ENCODE measurements at regions of chr3 and their contacts with region 1.

Region 1: GRCh38 chr3:126982471-126983175 is at the start of gene PLXNA1:
- DNase-seq: peak; percentile 81 to 95 (median 83)
- ATAC-seq: peak; percentile 81
- H3K4me3 ChIP-seq: peak within 1 kb of the TSS; percentile 57 to 69
- H3K4me3 Mint-ChIP-seq: peak within 1 kb of the TSS; percentile 85
- H3K27ac ChIP-seq: peak within 1 kb of the TSS; percentile 71 to 90
- H3K27ac Mint-ChIP-seq: peak within 1 kb of the TSS; percentile 94
- H3K4me1 ChIP-seq: peaks cover 19% of the 10 kb centered on the region
- H3K4me1 Mint-ChIP-seq: peaks cover 12% of the 10 kb centered on the region
- H3K27me3 ChIP-seq: peaks cover 0 to 2% of the 10 kb centered on the region in 2 experiments
- H3K27me3 Mint-ChIP-seq: peaks cover 14% of the 10 kb centered on the region
- CTCF ChIP-seq: peak; percentile 92
- total RNA-seq, gene PLXNA1: 7.3 to 8.4 TPM

Region 2: GRCh38 chr3:125594581-125595011 is 1388.0 kb before region 1 on chr3:
- CTCF ChIA-PET with region 1: no interaction called
- POLR2A ChIA-PET with region 1: no interaction called
- intact Hi-C with region 1: loop called in 1 of 2 experiments (anchors 5 kb)
- DNase-seq: peak in 2 of 9 experiments; percentile 6 to 17
- ATAC-seq: no peak
- H3K4me3 ChIP-seq: peak overlapping the region; percentile 85 to 91
- H3K4me3 Mint-ChIP-seq: peak overlapping the region; percentile 92
- H3K27ac ChIP-seq: peak overlapping the region; percentile 68 to 87
- H3K27ac Mint-ChIP-seq: peak overlapping the region; percentile 77
- H3K4me1 ChIP-seq: peaks cover 16% of the 10 kb centered on the region
- H3K4me1 Mint-ChIP-seq: peaks cover 44% of the 10 kb centered on the region
- H3K27me3 ChIP-seq: no peaks in the 10 kb centered on the region
- H3K27me3 Mint-ChIP-seq: no peaks in the 10 kb centered on the region
- CTCF ChIP-seq: no peak

Region 3: GRCh38 chr3:126357295-126358037 is 625.2 kb before region 1 on chr3 and contains the start of gene KLF15:
- CTCF ChIA-PET with region 1: no interaction called
- POLR2A ChIA-PET with region 1: no interaction called
- intact Hi-C with region 1: loop called in 1 of 2 experiments (anchors 2 kb)
- DNase-seq: peak; percentile 46 to 85 (median 71)
- ATAC-seq: peak; percentile 94
- H3K4me3 ChIP-seq: peak within 1 kb of the TSS; percentile 50 to 79
- H3K4me3 Mint-ChIP-seq: peak within 1 kb of the TSS; percentile 90
- H3K27ac ChIP-seq: no peak within 1 kb of the TSS
- H3K27ac Mint-ChIP-seq: peak within 1 kb of the TSS; percentile 77
- H3K4me1 ChIP-seq: peaks cover 14% of the 10 kb centered on the region
- H3K4me1 Mint-ChIP-seq: peaks cover 15% of the 10 kb centered on the region
- H3K27me3 ChIP-seq: peaks cover 13 to 19% of the 10 kb centered on the region in 2 experiments
- H3K27me3 Mint-ChIP-seq: peaks cover 52% of the 10 kb centered on the region
- CTCF ChIP-seq: no peak
- total RNA-seq, gene KLF15: 0.16 TPM in 1 of 2 experiments, not detected in the other

Region 4: GRCh38 chr3:126654571-126655383 is 327.8 kb before region 1 on chr3 and contains the start of gene TXNRD3:
- CTCF ChIA-PET with region 1: no interaction called
- POLR2A ChIA-PET with region 1: no interaction called
- intact Hi-C with region 1: loop called in 1 of 2 experiments (anchors 1 kb)
- DNase-seq: peak; percentile 52 to 87 (median 78)
- ATAC-seq: peak; percentile 97
- H3K4me3 ChIP-seq: peak within 1 kb of the TSS; percentile 35 to 58
- H3K4me3 Mint-ChIP-seq: peak within 1 kb of the TSS; percentile 88
- H3K27ac ChIP-seq: peak within 1 kb of the TSS in 1 of 2 experiments; percentile 27
- H3K27ac Mint-ChIP-seq: peak within 1 kb of the TSS; percentile 55
- H3K4me1 ChIP-seq: peaks cover 3% of the 10 kb centered on the region
- H3K4me1 Mint-ChIP-seq: peaks cover 10% of the 10 kb centered on the region
- H3K27me3 ChIP-seq: no peaks in the 10 kb centered on the region
- H3K27me3 Mint-ChIP-seq: no peaks in the 10 kb centered on the region
- CTCF ChIP-seq: no peak
- total RNA-seq, gene TXNRD3: 1.6 to 1.7 TPM

Region 5: DNA sequence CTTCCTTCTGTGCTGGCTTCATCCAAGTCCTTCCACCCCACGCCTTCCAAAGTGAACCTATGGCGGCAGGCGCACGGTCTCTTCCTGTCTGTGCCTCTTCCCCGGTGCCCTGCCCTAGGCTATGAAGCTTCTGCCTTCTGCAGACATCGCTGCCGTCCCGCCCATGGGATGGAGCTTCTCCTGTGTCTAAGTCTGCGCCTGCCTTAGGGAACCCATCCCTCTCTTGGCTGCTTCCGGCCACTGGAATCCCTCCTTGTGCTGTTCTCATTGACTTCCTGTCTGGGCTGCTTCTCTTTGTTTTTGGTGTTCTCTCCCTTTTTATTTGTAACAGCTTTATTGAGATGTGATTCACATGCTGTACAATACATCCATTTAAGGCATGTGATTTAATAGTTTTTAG is 261.4 kb before region 1 on chr3:
- CTCF ChIA-PET with region 1: no interaction called
- POLR2A ChIA-PET with region 1: no interaction called
- intact Hi-C with region 1: no loop called
- DNase-seq: no peak
- ATAC-seq: no peak
- H3K4me3 ChIP-seq: no peak overlapping the region
- H3K4me3 Mint-ChIP-seq: no peak overlapping the region
- H3K27ac ChIP-seq: no peak overlapping the region
- H3K27ac Mint-ChIP-seq: no peak overlapping the region
- H3K4me1 ChIP-seq: no peaks in the 10 kb centered on the region
- H3K4me1 Mint-ChIP-seq: peaks cover 8% of the 10 kb centered on the region
- H3K27me3 ChIP-seq: no peaks in the 10 kb centered on the region
- H3K27me3 Mint-ChIP-seq: no peaks in the 10 kb centered on the region
- CTCF ChIP-seq: no peak

Region 6: DNA sequence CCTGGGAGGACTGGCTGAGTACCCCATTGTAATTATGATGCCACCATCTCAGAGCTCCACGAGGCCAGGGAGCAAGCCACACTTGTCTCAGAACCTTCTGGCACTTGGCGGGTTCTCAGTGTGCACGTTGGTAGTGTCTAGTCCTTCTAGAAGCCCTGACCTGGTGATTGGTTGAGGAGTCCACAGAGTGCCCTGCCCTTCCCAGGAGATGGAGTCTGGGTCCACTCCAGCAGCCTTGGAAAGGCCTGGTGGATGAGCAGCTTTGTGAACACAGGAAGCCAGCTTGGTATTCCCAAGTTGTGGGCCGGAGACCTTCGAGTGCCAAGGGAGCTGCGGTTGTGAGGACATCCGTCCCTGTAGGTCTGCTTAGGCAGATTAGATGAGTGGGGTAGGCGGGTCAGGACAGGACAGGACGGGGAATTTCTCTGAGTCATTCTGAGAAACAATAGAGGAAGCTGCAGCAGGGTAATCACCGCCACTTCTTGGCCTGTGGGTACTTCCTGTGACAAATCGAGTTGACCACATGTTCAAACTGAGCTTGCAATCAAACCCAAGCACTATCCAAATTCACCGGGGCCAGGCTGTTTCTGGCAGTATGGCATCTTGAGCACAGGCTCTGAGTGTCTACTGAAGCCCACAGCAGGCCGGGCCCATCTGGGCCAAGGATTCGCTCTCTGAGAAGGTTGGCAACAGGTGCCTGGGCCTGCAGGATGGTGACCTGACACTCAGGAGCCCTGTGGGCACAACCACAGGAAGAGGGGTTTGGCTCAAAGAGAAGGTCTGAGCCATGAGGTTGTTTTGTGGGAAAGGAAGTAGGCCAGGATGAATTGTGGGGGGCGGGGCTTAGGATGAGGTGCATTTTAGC is 71.2 kb before region 1 on chr3:
- CTCF ChIA-PET with region 1: no interaction called
- POLR2A ChIA-PET with region 1: interaction called, 3 read pairs
- intact Hi-C with region 1: loop called in 1 of 2 experiments (anchors 10 kb)
- DNase-seq: peak; percentile 25 to 91 (median 69)
- ATAC-seq: peak; percentile 87
- H3K4me3 ChIP-seq: no peak overlapping the region
- H3K4me3 Mint-ChIP-seq: peak overlapping the region; percentile 44
- H3K27ac ChIP-seq: peak overlapping the region in 1 of 2 experiments; percentile 52
- H3K27ac Mint-ChIP-seq: peak overlapping the region; percentile 91
- H3K4me1 ChIP-seq: peaks cover 24% of the 10 kb centered on the region
- H3K4me1 Mint-ChIP-seq: peaks cover 29% of the 10 kb centered on the region
- H3K27me3 ChIP-seq: no peaks in the 10 kb centered on the region
- H3K27me3 Mint-ChIP-seq: no peaks in the 10 kb centered on the region
- CTCF ChIP-seq: no peak

Region 7: GRCh38 chr3:126947429-126948225 is 35.0 kb before region 1 on chr3:
- CTCF ChIA-PET with region 1: no interaction called
- POLR2A ChIA-PET with region 1: no interaction called
- intact Hi-C with region 1: no loop called
- DNase-seq: no peak
- ATAC-seq: no peak
- H3K4me3 ChIP-seq: no peak overlapping the region
- H3K4me3 Mint-ChIP-seq: no peak overlapping the region
- H3K27ac ChIP-seq: no peak overlapping the region
- H3K27ac Mint-ChIP-seq: no peak overlapping the region
- H3K4me1 ChIP-seq: no peaks in the 10 kb centered on the region
- H3K4me1 Mint-ChIP-seq: peaks cover 3% of the 10 kb centered on the region
- H3K27me3 ChIP-seq: no peaks in the 10 kb centered on the region
- H3K27me3 Mint-ChIP-seq: no peaks in the 10 kb centered on the region
- CTCF ChIP-seq: no peak

Region 8: GRCh38 chr3:127135241-127136023 is 152.8 kb after region 1 on chr3:
- CTCF ChIA-PET with region 1: no interaction called
- POLR2A ChIA-PET with region 1: no interaction called
- intact Hi-C with region 1: no loop called
- DNase-seq: no peak
- ATAC-seq: no peak
- H3K4me3 ChIP-seq: no peak overlapping the region
- H3K4me3 Mint-ChIP-seq: no peak overlapping the region
- H3K27ac ChIP-seq: no peak overlapping the region
- H3K27ac Mint-ChIP-seq: no peak overlapping the region
- H3K4me1 ChIP-seq: no peaks in the 10 kb centered on the region
- H3K4me1 Mint-ChIP-seq: peaks cover 2% of the 10 kb centered on the region
- H3K27me3 ChIP-seq: no peaks in the 10 kb centered on the region
- H3K27me3 Mint-ChIP-seq: peaks cover 39% of the 10 kb centered on the region
- CTCF ChIP-seq: no peak

Region 9: DNA sequence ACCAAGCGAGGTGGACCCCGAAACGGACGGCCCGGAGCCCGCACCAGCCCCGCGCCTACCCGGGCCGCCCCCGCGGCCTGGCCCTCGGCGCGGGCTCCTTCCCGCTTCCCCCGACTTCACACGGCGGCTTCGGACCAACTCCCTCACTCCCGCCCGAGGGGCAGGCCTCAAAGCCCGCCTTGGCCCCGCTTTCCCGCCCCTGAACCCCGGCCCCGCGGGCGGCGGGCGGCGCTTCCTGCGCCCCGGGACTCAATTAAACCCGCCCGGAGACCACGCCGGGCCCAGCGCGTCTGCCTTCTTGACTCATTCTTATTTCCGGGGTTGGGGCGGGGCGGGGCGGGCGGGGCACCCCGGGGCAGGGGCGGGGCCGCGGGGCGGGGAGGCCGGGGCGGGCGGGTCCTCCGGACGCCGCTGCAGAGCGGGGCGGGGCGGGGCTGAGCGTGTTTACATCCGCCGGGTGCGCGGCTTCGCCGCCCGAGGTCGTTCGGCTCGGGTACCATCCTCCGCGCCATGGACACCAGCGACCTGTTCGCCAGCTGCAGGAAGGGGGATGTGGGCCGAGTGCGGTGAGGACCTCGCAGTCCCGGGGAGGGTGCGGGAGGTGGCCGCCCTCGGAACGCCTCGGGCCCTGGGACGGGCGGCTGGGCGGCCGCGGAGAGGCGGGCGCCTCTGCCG is 690.0 kb after region 1 on chr3 and contains the start of gene ABTB1:
- CTCF ChIA-PET with region 1: no interaction called
- POLR2A ChIA-PET with region 1: no interaction called
- intact Hi-C with region 1: loop called (anchors 2 to 5 kb)
- DNase-seq: peak; percentile 74 to 92 (median 87)
- ATAC-seq: peak; percentile 83
- H3K4me3 ChIP-seq: peak within 1 kb of the TSS; percentile 71 to 87
- H3K4me3 Mint-ChIP-seq: peak within 1 kb of the TSS; percentile 93
- H3K27ac ChIP-seq: peak within 1 kb of the TSS; percentile 80 to 92
- H3K27ac Mint-ChIP-seq: peak within 1 kb of the TSS; percentile 99
- H3K4me1 ChIP-seq: peaks cover 31% of the 10 kb centered on the region
- H3K4me1 Mint-ChIP-seq: peaks cover 31% of the 10 kb centered on the region
- H3K27me3 ChIP-seq: no peaks in the 10 kb centered on the region
- H3K27me3 Mint-ChIP-seq: no peaks in the 10 kb centered on the region
- CTCF ChIP-seq: no peak
- total RNA-seq, gene ABTB1: 86.0 to 88.1 TPM

Measured in CD8-positive, alpha-beta T cell (primary cell).